Activated CD4-positive, alpha-beta T cell treated with anti-CD3 and anti-CD28 coated beads for 36 hours (primary cell): ENCODE measurements at regions of chr12 and their contacts with region 1.

Region 1: DNA sequence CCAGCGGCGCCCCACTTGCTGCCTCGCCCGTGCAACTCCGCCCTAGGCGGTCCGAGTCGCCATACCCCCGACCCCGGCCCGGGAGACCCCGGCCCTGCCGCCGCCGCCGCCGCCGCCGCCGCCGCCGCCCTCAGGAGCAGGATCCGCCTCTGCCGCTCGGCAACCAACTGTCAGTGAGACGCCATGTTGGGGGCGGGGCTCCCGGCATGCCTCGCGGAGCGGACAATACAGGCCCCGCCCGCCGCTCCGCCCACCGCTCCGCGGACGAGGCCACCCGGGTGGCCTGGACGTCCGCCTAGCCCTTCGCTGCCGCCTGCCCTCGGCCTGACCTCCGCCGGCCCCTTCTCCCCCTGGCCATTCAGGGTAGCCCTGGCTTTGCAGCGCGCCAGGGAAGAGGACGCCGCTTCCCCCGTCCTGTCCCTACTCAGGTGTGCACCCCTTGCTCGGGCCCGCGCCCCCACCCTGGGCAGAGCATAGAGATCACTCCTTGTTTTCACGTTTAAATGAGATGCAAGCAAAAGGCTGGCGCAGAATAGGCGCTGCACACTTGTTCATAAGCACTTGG is at the start of gene HECTD4:
- DNase-seq: peak; percentile 97
- ATAC-seq: peak; percentile 98
- H3K4me3 Mint-ChIP-seq: peak within 1 kb of the TSS; percentile 91
- H3K27ac Mint-ChIP-seq: peak within 1 kb of the TSS; percentile 90
- H3K4me1 Mint-ChIP-seq: peaks cover 33% of the 10 kb centered on the region
- H3K27me3 Mint-ChIP-seq: no peaks in the 10 kb centered on the region
- total RNA-seq, gene HECTD4: 22.2 to 23.8 TPM

Region 2: GRCh38 chr12:111841750-111842555 is 540.4 kb before region 1 on chr12 and contains the start of gene MAPKAPK5:
- CTCF ChIA-PET with region 1: interaction called, 3 read pairs
- POLR2A ChIA-PET with region 1: no interaction called
- intact Hi-C with region 1: loop called in 1 of 2 experiments (anchors 1 kb)
- DNase-seq: peak; percentile 97
- ATAC-seq: peak; percentile 81
- H3K4me3 Mint-ChIP-seq: peak within 1 kb of the TSS; percentile 87
- H3K27ac Mint-ChIP-seq: peak within 1 kb of the TSS; percentile 96
- H3K4me1 Mint-ChIP-seq: peaks cover 50% of the 10 kb centered on the region
- H3K27me3 Mint-ChIP-seq: no peaks in the 10 kb centered on the region
- total RNA-seq, gene MAPKAPK5: 47.5 to 57.5 TPM

Region 3: GRCh38 chr12:112012775-112013600 is 369.3 kb before region 1 on chr12 and contains the starts of genes ERP29 and TMEM116:
- CTCF ChIA-PET with region 1: interaction called, 4 read pairs
- POLR2A ChIA-PET with region 1: no interaction called
- intact Hi-C with region 1: loop called in 1 of 2 experiments (anchors 1 kb)
- DNase-seq: peak; percentile 100
- ATAC-seq: peak; percentile 80
- H3K4me3 Mint-ChIP-seq: peak within 1 kb of the TSS; percentile 98
- H3K27ac Mint-ChIP-seq: peak within 1 kb of the TSS; percentile 99
- H3K4me1 Mint-ChIP-seq: peaks cover 53% of the 10 kb centered on the region
- H3K27me3 Mint-ChIP-seq: no peaks in the 10 kb centered on the region
- total RNA-seq, gene ERP29: 79.7 to 87.3 TPM
- total RNA-seq, gene TMEM116: 11.2 to 12.5 TPM

Region 4: GRCh38 chr12:112125250-112125999 is 256.9 kb before region 1 on chr12 and contains the start of gene TRAFD1:
- CTCF ChIA-PET with region 1: no interaction called
- POLR2A ChIA-PET with region 1: no interaction called
- intact Hi-C with region 1: loop called (anchors 1 to 5 kb)
- DNase-seq: peak; percentile 99
- ATAC-seq: peak; percentile 99
- H3K4me3 Mint-ChIP-seq: peak within 1 kb of the TSS; percentile 83
- H3K27ac Mint-ChIP-seq: peak within 1 kb of the TSS; percentile 82
- H3K4me1 Mint-ChIP-seq: peaks cover 38% of the 10 kb centered on the region
- H3K27me3 Mint-ChIP-seq: no peaks in the 10 kb centered on the region
- total RNA-seq, gene TRAFD1: 52.5 to 54.1 TPM

Region 5: DNA sequence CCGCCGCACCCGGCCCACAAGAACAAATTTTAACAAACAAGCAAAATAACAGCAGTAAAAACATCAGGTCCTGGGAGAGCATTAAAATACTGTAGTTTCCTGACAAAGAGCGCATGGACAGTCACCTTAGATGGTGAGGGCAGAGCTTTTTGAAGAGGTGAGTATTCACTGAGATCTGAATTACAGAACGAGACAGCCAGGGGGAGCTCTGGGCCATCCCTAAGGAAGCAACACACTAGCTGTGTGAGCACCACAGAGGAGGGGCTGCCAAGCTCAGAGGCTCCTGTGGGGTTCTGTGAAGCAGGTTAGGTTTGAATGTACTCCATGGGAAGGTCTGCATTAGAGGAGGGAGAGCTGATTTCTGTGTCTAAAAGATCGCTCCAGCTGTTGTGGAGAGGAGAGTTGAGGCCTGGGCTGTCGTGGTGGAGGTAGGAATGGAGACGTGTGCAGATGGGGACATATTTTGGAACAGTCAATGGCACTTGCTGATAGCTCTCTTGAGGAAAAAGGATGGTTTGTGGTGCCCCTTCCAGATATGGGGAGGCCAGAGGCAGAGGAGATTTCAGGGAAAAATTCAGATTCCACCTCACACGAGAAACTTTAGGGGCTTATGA is 184.1 kb before region 1 on chr12:
- CTCF ChIA-PET with region 1: interaction called, 59 read pairs
- POLR2A ChIA-PET with region 1: interaction called, 5 read pairs
- intact Hi-C with region 1: loop called (anchors 1 kb)
- DNase-seq: peak; percentile 78
- ATAC-seq: peak; percentile 98
- H3K4me3 Mint-ChIP-seq: no peak overlapping the region
- H3K27ac Mint-ChIP-seq: no peak overlapping the region
- H3K4me1 Mint-ChIP-seq: no peaks in the 10 kb centered on the region
- H3K27me3 Mint-ChIP-seq: no peaks in the 10 kb centered on the region

Region 6: GRCh38 chr12:112303004-112303403 is 79.3 kb before region 1 on chr12:
- CTCF ChIA-PET with region 1: no interaction called
- POLR2A ChIA-PET with region 1: no interaction called
- intact Hi-C with region 1: loop called in 1 of 2 experiments (anchors 2 kb)
- DNase-seq: peak; percentile 64
- ATAC-seq: peak; percentile 100
- H3K4me3 Mint-ChIP-seq: no peak overlapping the region
- H3K27ac Mint-ChIP-seq: peak overlapping the region; percentile 77
- H3K4me1 Mint-ChIP-seq: peaks cover 9% of the 10 kb centered on the region
- H3K27me3 Mint-ChIP-seq: no peaks in the 10 kb centered on the region

Region 7: DNA sequence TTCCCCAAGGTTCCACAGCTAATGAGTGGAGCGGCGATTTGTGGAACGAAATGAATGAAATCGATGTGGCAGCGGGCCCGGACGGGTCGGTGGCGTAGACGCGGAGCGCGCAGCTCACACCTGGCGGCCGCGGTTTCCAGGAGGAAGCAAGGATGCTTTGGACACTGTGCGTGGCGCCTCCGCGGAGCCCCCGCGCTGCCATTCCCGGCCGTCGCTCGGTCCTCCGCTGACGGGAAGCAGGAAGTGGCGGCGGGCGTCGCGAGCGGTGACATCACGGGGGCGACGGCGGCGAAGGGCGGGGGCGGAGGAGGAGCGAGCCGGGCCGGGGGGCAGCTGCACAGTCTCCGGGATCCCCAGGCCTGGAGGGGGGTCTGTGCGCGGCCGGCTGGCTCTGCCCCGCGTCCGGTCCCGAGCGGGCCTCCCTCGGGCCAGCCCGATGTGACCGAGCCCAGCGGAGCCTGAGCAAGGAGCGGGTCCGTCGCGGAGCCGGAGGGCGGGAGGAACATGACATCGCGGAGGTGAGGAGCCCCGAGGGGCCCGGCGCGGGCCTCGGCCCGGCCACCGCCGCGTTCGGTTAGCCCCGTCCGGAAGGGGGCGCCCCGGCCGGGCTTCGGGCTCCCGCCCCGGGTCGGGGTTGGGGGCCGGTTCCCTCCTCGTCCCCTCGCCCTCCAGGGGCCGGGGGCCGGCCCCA is 36.4 kb after region 1 on chr12 and contains the start of gene PTPN11:
- CTCF ChIA-PET with region 1: interaction called, 4 read pairs
- POLR2A ChIA-PET with region 1: no interaction called
- intact Hi-C with region 1: loop called in 1 of 2 experiments (anchors 2 kb)
- DNase-seq: peak; percentile 95
- ATAC-seq: peak; percentile 78
- H3K4me3 Mint-ChIP-seq: peak within 1 kb of the TSS; percentile 97
- H3K27ac Mint-ChIP-seq: peak within 1 kb of the TSS; percentile 97
- H3K4me1 Mint-ChIP-seq: peaks cover 40% of the 10 kb centered on the region
- H3K27me3 Mint-ChIP-seq: no peaks in the 10 kb centered on the region
- total RNA-seq, gene PTPN11: 129 to 134 TPM